GM12878 (cell line): ENCODE measurements at regions of chr7 and their contacts with region 1.

Region 1: GRCh38 chr7:77199013-77199966 is at the start of gene FGL2:
- DNase-seq: no peak
- ATAC-seq: peak; percentile 37
- H3K4me3 ChIP-seq: peak within 1 kb of the TSS; percentile 64
- H3K27ac ChIP-seq: peak within 1 kb of the TSS; percentile 81
- H3K4me1 ChIP-seq: peaks cover 32% of the 10 kb centered on the region
- H3K27me3 ChIP-seq: no peaks in the 10 kb centered on the region
- CTCF ChIP-seq: no peak
- EP300 ChIP-seq: no peak
- POLR2A ChIP-seq: no peak
- RAD21 ChIP-seq: no peak
- polyA plus RNA-seq, gene FGL2: 1.2 to 1.6 TPM

Region 2: DNA sequence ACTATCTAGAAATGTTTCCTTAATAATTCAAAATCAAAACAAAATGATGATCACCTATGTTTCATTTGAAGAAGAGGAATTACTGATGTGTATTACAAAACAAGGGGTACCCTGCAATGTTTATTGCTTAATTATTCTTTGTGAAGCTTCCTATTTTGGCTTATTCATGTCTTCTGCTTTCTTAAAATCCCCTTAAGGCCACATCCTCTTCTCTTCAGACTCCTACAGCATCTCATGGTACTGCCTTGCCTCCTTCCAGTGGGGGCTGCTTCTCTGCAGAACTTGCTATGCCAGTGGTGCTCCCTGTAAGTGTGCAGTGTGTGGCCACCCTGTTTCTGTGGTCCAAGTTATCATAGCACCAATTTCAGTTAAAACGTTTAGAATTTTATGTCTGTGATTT is 41.8 kb before region 1 on chr7:
- CTCF ChIA-PET with region 1: no interaction called
- POLR2A ChIA-PET with region 1: no interaction called
- RAD21 ChIA-PET with region 1: interaction called, 3 read pairs
- SMC1A ChIA-PET with region 1: interaction called, 6 read pairs
- in situ Hi-C with region 1: no loop called
- intact Hi-C with region 1: loop called (anchors 5 kb)
- DNase-seq: peak; percentile 54
- ATAC-seq: peak; percentile 82
- H3K4me3 ChIP-seq: peak overlapping the region; percentile 41
- H3K27ac ChIP-seq: peak overlapping the region; percentile 75
- H3K4me1 ChIP-seq: peaks cover 9% of the 10 kb centered on the region
- H3K27me3 ChIP-seq: no peaks in the 10 kb centered on the region
- CTCF ChIP-seq: no peak
- EP300 ChIP-seq: 0 out of 4 replicates have a peak, but pooled peaks of 1 of the 2 experiments have one; percentile 23
- POLR2A ChIP-seq: no peak
- RAD21 ChIP-seq: no peak

Region 3: DNA sequence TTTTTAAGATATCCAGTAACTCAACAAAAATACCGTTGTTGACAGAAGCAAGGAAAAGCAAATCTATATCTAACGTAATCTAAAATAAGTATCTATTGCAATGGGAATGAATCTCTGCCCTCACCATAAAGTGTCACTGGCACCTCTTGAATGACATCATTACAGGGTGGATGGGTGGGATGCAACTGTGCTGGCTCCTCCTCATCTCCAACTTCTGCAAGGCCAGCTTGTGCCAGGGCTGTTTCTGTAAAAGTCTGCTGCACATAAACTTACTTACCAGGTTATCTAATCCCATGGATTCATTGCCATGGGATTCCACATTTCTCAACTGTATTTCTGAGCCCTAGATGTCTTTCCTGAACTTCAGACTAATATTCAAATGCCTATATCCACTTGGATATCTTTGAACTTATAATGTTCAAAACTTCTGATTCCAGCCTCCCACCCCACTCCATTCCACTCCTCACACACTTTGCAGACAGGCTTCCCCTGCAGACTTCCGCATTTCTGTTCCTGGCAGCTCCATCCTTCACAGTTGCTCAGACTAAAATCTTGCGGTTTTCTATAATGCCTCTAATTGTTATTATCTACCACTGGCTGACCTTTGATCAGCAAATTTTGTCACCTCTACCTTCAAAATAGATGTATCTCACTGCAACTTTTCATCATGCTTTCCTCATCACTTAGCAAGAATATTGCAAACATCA is 10.4 kb before region 1 on chr7:
- CTCF ChIA-PET with region 1: interaction called, 4 read pairs
- POLR2A ChIA-PET with region 1: interaction called, 9 read pairs
- RAD21 ChIA-PET with region 1: interaction called, 28 read pairs
- SMC1A ChIA-PET with region 1: interaction called, 13 read pairs
- in situ Hi-C with region 1: no loop called
- intact Hi-C with region 1: no loop called
- DNase-seq: no peak
- ATAC-seq: no peak
- H3K4me3 ChIP-seq: no peak overlapping the region
- H3K27ac ChIP-seq: no peak overlapping the region
- H3K4me1 ChIP-seq: peaks cover 11% of the 10 kb centered on the region
- H3K27me3 ChIP-seq: no peaks in the 10 kb centered on the region
- CTCF ChIP-seq: no peak
- EP300 ChIP-seq: no peak
- POLR2A ChIP-seq: no peak
- RAD21 ChIP-seq: no peak

Region 4: DNA sequence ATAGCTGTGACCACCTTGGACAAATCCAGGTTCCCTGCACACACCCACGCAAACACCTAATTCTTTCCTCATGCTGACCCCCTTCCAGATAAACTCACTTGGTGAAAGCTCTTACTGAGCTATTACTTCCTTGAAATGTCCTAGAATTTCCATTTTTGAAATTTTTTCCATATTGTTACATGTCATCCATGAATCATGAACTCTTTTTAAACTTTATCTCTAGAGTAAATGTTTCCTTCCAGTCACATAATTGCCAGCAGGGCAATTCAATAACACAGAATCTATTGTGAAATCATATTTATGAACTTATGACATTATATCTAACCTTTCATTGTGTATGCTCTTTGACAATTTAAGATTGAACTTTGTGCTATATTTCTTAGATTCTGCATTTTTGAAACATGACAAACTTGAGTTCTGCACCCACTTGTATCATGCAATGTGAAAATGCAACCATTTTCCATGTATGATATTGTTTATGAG is 27.1 kb after region 1 on chr7:
- CTCF ChIA-PET with region 1: no interaction called
- POLR2A ChIA-PET with region 1: interaction called, 3 read pairs
- RAD21 ChIA-PET with region 1: no interaction called
- SMC1A ChIA-PET with region 1: interaction called, 4 read pairs
- in situ Hi-C with region 1: no loop called
- intact Hi-C with region 1: loop called (anchors 2 kb)
- DNase-seq: no peak
- ATAC-seq: no peak
- H3K4me3 ChIP-seq: no peak overlapping the region
- H3K27ac ChIP-seq: no peak overlapping the region
- H3K4me1 ChIP-seq: no peaks in the 10 kb centered on the region
- H3K27me3 ChIP-seq: no peaks in the 10 kb centered on the region
- CTCF ChIP-seq: no peak
- EP300 ChIP-seq: no peak
- POLR2A ChIP-seq: no peak
- RAD21 ChIP-seq: no peak

Region 5: GRCh38 chr7:77326696-77327628 is 127.7 kb after region 1 on chr7:
- CTCF ChIA-PET with region 1: interaction called, 15 read pairs
- POLR2A ChIA-PET with region 1: interaction called, 3 read pairs
- RAD21 ChIA-PET with region 1: interaction called, 18 read pairs
- SMC1A ChIA-PET with region 1: interaction called, 11 read pairs
- in situ Hi-C with region 1: no loop called
- intact Hi-C with region 1: loop called (anchors 2 kb)
- DNase-seq: no peak
- ATAC-seq: no peak
- H3K4me3 ChIP-seq: no peak overlapping the region
- H3K27ac ChIP-seq: no peak overlapping the region
- H3K4me1 ChIP-seq: peaks cover 42% of the 10 kb centered on the region
- H3K27me3 ChIP-seq: no peaks in the 10 kb centered on the region
- CTCF ChIP-seq: no peak
- EP300 ChIP-seq: no peak
- POLR2A ChIP-seq: no peak
- RAD21 ChIP-seq: no peak

Region 6: GRCh38 chr7:77331938-77332695 is 132.8 kb after region 1 on chr7:
- CTCF ChIA-PET with region 1: interaction called, 15 read pairs
- POLR2A ChIA-PET with region 1: interaction called, 3 read pairs
- RAD21 ChIA-PET with region 1: interaction called, 18 read pairs
- SMC1A ChIA-PET with region 1: interaction called, 11 read pairs
- in situ Hi-C with region 1: no loop called
- intact Hi-C with region 1: loop called (anchors 2 kb)
- DNase-seq: peak; percentile 95
- ATAC-seq: peak; percentile 84
- H3K4me3 ChIP-seq: no peak overlapping the region
- H3K27ac ChIP-seq: no peak overlapping the region
- H3K4me1 ChIP-seq: peaks cover 51% of the 10 kb centered on the region
- H3K27me3 ChIP-seq: no peaks in the 10 kb centered on the region
- CTCF ChIP-seq: peak; percentile 58 to 82 (median 69); a peak in 5 of 6 replicates
- EP300 ChIP-seq: no peak
- POLR2A ChIP-seq: no peak
- RAD21 ChIP-seq: peak; percentile 90